Mammary epithelial cell (primary cell): ENCODE measurements at regions of chr3 and their contacts with region 1.

Region 1: GRCh38 chr3:127455541-127456450 is 134.7 kb downstream of the TPRA1 start:
- DNase-seq: peak; percentile 67
- H3K4me3 ChIP-seq: peak overlapping the region; percentile 48 to 64 (median 51)
- H3K27ac ChIP-seq: peak overlapping the region; percentile 65
- H3K4me1 ChIP-seq: peaks cover 33% of the 10 kb centered on the region
- H3K27me3 ChIP-seq: no peaks in the 10 kb centered on the region
- CTCF ChIP-seq: peak; percentile 62 to 83

Region 2: GRCh38 chr3:126522363-126522788 is 933.4 kb before region 1 on chr3:
- CTCF ChIA-PET with region 1: interaction called, 3 read pairs
- dilution Hi-C with region 1: no loop called
- in situ Hi-C with region 1: no loop called
- intact Hi-C with region 1: loop called (anchors 5 kb)
- DNase-seq: peak; percentile 31
- H3K4me3 ChIP-seq: no peak overlapping the region
- H3K27ac ChIP-seq: no peak overlapping the region
- H3K4me1 ChIP-seq: peaks cover 5% of the 10 kb centered on the region
- H3K27me3 ChIP-seq: peaks cover 4% of the 10 kb centered on the region
- CTCF ChIP-seq: peak; percentile 62 to 89

Region 3: GRCh38 chr3:126752303-126752842 is 703.4 kb before region 1 on chr3:
- CTCF ChIA-PET with region 1: interaction called, 6 read pairs
- dilution Hi-C with region 1: no loop called
- in situ Hi-C with region 1: loop called in 1 of 2 experiments (anchors 5 kb)
- intact Hi-C with region 1: loop called (anchors 1 kb)
- DNase-seq: peak; percentile 61
- H3K4me3 ChIP-seq: no peak overlapping the region
- H3K27ac ChIP-seq: peak overlapping the region; percentile 78
- H3K4me1 ChIP-seq: peaks cover 34% of the 10 kb centered on the region
- H3K27me3 ChIP-seq: no peaks in the 10 kb centered on the region
- CTCF ChIP-seq: peak; percentile 88 to 98

Region 4: GRCh38 chr3:126982471-126983175 is 473.2 kb before region 1 on chr3 and contains the start of gene PLXNA1:
- CTCF ChIA-PET with region 1: no interaction called
- dilution Hi-C with region 1: no loop called
- in situ Hi-C with region 1: loop called in 1 of 2 experiments (anchors 10 kb)
- intact Hi-C with region 1: loop called (anchors 1 kb)
- DNase-seq: peak; percentile 85
- H3K4me3 ChIP-seq: peak within 1 kb of the TSS; percentile 70 to 81 (median 71)
- H3K27ac ChIP-seq: peak within 1 kb of the TSS; percentile 50
- H3K4me1 ChIP-seq: peaks cover 36% of the 10 kb centered on the region
- H3K27me3 ChIP-seq: no peaks in the 10 kb centered on the region
- CTCF ChIP-seq: peak; percentile 81 to 89
- total RNA-seq, gene PLXNA1: 104 to 156 TPM

Region 5: DNA sequence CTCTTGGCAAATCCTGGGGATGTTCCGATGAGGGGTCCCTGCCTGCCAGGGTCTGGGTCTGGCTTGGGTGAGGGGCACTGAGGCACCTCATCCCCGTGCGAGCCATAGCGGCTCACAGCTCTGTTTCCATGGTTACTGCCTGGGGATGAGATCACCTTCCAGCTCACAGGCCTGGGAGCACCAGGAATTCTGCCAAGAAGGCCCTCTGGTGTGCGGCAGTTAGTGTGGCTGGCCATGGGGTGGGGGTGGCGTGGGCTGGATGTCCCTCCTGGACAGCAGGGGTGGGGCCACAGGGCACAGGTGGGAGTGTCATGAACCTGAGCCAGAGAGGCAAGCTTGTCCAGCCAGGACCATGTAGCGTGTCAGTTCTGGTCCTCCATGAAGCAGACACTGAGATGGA is 285.0 kb before region 1 on chr3:
- CTCF ChIA-PET with region 1: interaction called, 21 read pairs
- dilution Hi-C with region 1: no loop called
- in situ Hi-C with region 1: no loop called
- intact Hi-C with region 1: loop called (anchors 5 kb)
- DNase-seq: peak; percentile 16
- H3K4me3 ChIP-seq: no peak overlapping the region
- H3K27ac ChIP-seq: no peak overlapping the region
- H3K4me1 ChIP-seq: no peaks in the 10 kb centered on the region
- H3K27me3 ChIP-seq: no peaks in the 10 kb centered on the region
- CTCF ChIP-seq: no peak

Region 6: DNA sequence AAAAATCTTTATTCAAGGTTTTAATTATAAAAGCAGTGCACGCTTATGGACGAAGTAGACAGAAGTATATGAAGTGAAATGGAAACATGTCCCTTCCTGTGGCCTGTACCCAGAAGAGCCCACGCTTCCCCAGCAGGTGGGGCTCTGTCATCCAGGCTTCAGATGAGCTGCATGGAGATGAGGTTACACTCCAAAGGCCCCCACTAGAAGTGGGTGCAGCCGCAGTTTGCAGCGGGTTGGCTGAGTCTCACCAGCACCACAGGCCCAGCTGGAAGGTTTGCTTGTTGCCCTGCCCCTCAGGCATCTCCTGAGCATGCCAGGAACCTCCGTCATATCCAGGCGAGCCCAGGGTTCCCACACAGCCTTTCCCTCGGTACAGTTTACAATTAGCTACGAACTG is 201.1 kb before region 1 on chr3:
- CTCF ChIA-PET with region 1: interaction called, 4 read pairs
- dilution Hi-C with region 1: no loop called
- in situ Hi-C with region 1: loop called (anchors 10 kb)
- intact Hi-C with region 1: loop called (anchors 1 kb)
- DNase-seq: peak; percentile 67
- H3K4me3 ChIP-seq: no peak overlapping the region
- H3K27ac ChIP-seq: no peak overlapping the region
- H3K4me1 ChIP-seq: no peaks in the 10 kb centered on the region
- H3K27me3 ChIP-seq: no peaks in the 10 kb centered on the region
- CTCF ChIP-seq: peak; percentile 48 to 75

Region 7: DNA sequence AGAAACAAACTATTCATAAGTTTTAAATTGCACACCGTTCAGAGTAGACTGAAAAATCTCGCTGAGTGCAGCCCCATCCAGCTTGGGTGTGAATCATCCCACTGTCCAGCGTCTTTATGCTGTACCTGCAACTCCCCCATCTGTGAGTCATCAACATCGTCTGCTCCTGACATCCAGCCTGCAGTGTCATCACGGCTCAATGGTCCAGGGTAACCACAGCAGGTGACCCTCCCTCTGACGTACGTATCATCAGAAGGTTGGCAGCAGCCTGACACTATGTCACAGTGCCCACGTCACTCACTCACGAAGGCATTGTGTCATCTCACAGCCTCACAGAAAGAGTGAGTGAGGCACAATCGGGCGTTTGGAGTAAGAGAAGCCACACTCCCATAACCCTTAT is 69.6 kb after region 1 on chr3:
- CTCF ChIA-PET with region 1: no interaction called
- dilution Hi-C with region 1: no loop called
- in situ Hi-C with region 1: no loop called
- intact Hi-C with region 1: no loop called
- DNase-seq: peak; percentile 98
- H3K4me3 ChIP-seq: no peak overlapping the region
- H3K27ac ChIP-seq: peak overlapping the region; percentile 1
- H3K4me1 ChIP-seq: peaks cover 6% of the 10 kb centered on the region
- H3K27me3 ChIP-seq: no peaks in the 10 kb centered on the region
- CTCF ChIP-seq: no peak

Region 8: DNA sequence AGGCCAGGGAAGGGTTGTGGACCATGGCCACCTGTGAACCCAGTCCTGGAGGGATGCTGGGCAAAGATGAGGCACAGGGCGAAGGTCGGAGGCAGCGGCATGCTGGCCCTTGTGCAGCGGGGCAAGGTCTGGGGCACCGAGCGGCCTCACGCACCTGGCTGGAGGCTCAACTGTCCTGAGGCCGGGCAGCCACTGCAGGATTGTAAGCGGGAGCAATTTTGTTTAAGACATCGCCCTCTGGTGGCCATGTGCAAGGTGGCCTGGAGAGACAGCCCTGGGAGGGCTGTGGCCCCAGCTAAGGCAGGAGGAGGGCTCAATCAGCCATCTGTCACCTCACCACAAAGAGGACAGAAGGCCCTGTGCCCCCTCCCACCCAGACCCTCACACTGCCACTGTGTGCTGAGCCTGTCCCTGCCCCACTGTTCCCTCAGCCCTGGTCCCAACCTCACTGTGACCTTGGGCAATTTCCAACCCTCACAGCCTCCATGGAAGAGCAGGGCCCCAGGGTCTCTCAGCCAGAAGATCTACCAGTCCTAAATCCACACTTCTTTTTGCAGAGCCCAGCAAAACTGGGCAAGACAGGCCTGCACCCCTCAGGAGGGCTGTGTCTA is 88.5 kb after region 1 on chr3:
- CTCF ChIA-PET with region 1: interaction called, 3 read pairs
- dilution Hi-C with region 1: loop called (anchors 5 kb)
- in situ Hi-C with region 1: no loop called
- intact Hi-C with region 1: loop called (anchors 1 kb)
- DNase-seq: peak; percentile 43
- H3K4me3 ChIP-seq: no peak overlapping the region
- H3K27ac ChIP-seq: no peak overlapping the region
- H3K4me1 ChIP-seq: peaks cover 5% of the 10 kb centered on the region
- H3K27me3 ChIP-seq: no peaks in the 10 kb centered on the region
- CTCF ChIP-seq: peak; percentile 79 to 89